T-cell (primary cell): ENCODE measurements at regions of chr12 and their contacts with region 1.

Region 1: DNA sequence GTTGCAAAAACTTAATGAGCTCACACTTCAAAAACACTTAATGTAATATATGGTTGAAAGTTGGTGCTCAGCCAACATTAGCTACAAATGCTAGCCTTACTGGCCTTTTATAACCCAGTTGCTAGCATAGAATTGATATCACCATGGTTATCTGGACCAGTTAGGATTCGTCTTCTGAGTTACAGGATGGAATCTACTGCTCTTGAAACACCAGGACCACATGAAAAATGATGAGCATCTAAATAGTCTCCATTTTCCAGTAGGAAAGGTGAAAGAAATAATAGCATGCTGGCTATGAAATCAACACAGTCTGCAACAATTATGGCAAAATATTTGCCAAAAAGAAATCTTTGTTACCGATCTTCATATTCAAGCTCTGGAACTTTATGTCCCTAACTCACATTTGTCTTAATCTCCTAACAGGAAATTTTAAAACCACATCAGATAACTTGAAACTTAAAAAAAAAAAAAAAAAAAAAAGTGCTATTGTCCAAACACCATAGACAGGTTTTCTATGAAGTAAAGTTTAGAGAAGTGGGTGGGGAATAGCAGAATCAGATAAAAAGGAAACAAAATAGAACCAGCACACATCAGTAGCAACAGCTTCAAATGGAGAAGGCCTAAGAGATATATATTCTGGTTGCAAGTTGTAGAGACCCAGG is 12.6 kb upstream of the CD69 start:
- DNase-seq: peak in 1 of 35 experiments; percentile 48
- ATAC-seq: peak in 3 of 4 experiments; percentile 63 to 80 (median 66)
- H3K4me3 ChIP-seq: no peak overlapping the region
- H3K4me3 Mint-ChIP-seq: peak overlapping the region; percentile 5 to 61 (median 37)
- H3K27ac ChIP-seq: peak overlapping the region; percentile 14
- H3K27ac Mint-ChIP-seq: peak overlapping the region; percentile 78 to 84
- H3K4me1 ChIP-seq: peaks cover 25 to 50% of the 10 kb centered on the region in 2 experiments
- H3K4me1 Mint-ChIP-seq: peaks cover 80 to 89% (median 82%) of the 10 kb centered on the region in 3 donors
- H3K27me3 ChIP-seq: no peaks in the 10 kb centered on the region
- H3K27me3 Mint-ChIP-seq: no peaks in the 10 kb centered on the region

Region 2: GRCh38 chr12:9961106-9961505 is 187.8 kb after region 1 on chr12:
- CTCF ChIA-PET with region 1: no interaction called
- POLR2A ChIA-PET with region 1: interaction called in 1 of 2 experiments, 10 read pairs
- DNase-seq: no peak
- ATAC-seq: no peak
- H3K4me3 ChIP-seq: no peak overlapping the region
- H3K4me3 Mint-ChIP-seq: no peak overlapping the region
- H3K27ac ChIP-seq: no peak overlapping the region
- H3K27ac Mint-ChIP-seq: no peak overlapping the region
- H3K4me1 ChIP-seq: peaks cover 18 to 27% of the 10 kb centered on the region in 2 experiments
- H3K4me1 Mint-ChIP-seq: peaks cover 30 to 39% (median 31%) of the 10 kb centered on the region in 3 donors
- H3K27me3 ChIP-seq: no peaks in the 10 kb centered on the region
- H3K27me3 Mint-ChIP-seq: no peaks in the 10 kb centered on the region

Region 3: GRCh38 chr12:10182354-10183061 is 409.2 kb after region 1 on chr12:
- CTCF ChIA-PET with region 1: no interaction called
- POLR2A ChIA-PET with region 1: interaction called in 1 of 2 experiments, 18 read pairs
- DNase-seq: peak in 1 of 35 experiments; percentile 11
- ATAC-seq: no peak
- H3K4me3 ChIP-seq: no peak overlapping the region
- H3K4me3 Mint-ChIP-seq: no peak overlapping the region
- H3K27ac ChIP-seq: no peak overlapping the region
- H3K27ac Mint-ChIP-seq: no peak overlapping the region
- H3K4me1 ChIP-seq: no peaks in the 10 kb centered on the region
- H3K4me1 Mint-ChIP-seq: peaks cover 0 to 3% (median 0%) of the 10 kb centered on the region in 3 donors
- H3K27me3 ChIP-seq: peaks cover 0 to 29% of the 10 kb centered on the region in 2 experiments
- H3K27me3 Mint-ChIP-seq: peaks cover 15 to 36% of the 10 kb centered on the region in 2 donors